Heart left ventricle (tissue), 16 donors: ENCODE measurements at regions of chr1 and their contacts with region 1.

Region 1: DNA sequence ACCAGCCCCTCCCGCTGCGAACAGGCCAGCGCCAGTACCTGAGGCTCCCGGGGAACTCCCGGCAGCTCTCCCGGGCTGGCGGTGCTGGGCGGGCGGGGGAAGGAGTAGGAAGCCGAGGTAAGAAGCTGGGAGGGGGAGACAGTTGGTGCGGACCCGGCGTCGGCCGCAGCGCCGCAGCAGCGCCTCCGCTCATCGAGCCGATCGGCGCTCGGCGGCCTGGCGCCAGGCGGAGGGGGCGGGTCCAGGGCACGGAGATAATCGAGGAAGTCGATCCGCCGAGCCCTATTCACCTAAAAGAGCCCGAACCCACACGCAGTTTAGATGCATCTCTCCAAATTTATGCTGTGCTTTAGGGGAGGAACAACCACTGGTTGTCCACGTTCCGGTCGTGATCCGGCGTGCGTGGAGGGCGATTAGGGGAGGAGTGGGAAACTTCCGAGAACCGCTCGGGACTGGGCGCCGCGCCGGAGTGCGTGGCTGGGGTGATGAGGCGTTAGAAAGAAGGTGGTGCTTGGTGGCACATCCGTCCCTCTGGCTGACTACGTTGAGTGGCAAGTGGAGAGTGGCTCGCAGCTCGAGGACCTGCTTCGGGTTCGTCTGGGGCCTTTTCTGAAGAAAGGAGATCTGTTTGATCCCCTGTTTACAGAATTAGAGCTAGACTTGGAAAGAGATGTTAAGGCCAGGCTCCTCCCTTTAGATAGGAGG is at the start of gene VAMP4:
- DNase-seq: peak; percentile 89 to 93 (median 90)
- ATAC-seq: peak; percentile 89 to 94 (median 94)
- H3K4me3 ChIP-seq: peak within 1 kb of the TSS; percentile 68 to 96 (median 88)
- H3K27ac ChIP-seq: peak within 1 kb of the TSS; percentile 86 to 98 (median 95)
- H3K4me1 ChIP-seq: peaks cover 0 to 50% (median 23%) of the 10 kb centered on the region in 12 donors
- H3K27me3 ChIP-seq: no peaks in the 10 kb centered on the region
- CTCF ChIP-seq: no peak
- POLR2A ChIP-seq: peak in 1 of 2 donors; percentile 70
- total RNA-seq, gene VAMP4: 3.8 to 11.3 (median 7.2) TPM

Region 2: DNA sequence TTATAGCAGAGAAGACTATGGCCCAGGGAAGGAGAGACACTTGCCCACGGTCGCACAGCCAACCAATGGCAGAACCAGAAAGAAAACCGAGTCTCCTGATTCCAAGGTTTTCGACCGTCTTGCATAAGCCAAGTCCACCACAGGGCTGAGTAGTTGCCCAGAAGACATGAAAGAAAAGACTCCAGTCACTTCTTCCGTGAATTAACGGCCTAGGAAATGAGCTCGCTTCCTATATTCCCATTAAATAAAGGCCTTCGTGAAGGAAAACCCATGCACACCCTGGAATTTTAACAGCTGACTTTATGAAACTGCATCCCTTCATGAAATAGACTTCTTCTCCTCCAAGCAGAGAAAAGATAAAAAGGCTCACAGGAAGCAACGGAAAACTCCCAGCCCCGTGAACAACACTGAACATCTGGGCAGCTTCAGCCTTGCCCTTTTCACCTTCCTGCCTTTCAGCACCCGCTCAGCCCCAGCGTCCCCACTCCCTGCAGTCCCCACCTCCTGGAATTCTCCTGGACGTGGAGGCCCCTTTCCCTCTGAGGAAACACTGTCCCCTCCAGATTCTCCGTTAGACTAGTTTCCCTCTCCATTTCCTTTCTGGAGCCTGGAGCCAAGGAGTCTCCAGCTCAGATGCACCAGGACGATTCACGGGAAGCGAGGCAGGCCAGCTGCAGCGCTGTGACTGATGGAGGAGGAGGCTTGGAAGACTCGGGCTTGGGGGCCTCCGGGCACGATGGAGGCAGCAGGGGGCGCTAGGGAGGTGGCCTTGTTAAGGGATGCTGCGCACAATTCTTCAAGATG is 86.9 kb before region 1 on chr1:
- intact Hi-C with region 1: loop called in 1 of 10 experiments (anchors 2 kb)
- DNase-seq: peak; percentile 85 to 91 (median 86)
- ATAC-seq: peak; percentile 84 to 92 (median 88)
- H3K4me3 ChIP-seq: peak overlapping the region in 10 of 12 donors; percentile 10 to 35 (median 21)
- H3K27ac ChIP-seq: peak overlapping the region; percentile 45 to 95 (median 79)
- H3K4me1 ChIP-seq: peaks cover 2 to 53% (median 31%) of the 10 kb centered on the region in 12 donors
- H3K27me3 ChIP-seq: no peaks in the 10 kb centered on the region
- CTCF ChIP-seq: peak; percentile 49 to 84 (median 77)
- POLR2A ChIP-seq: no peak

Region 3: GRCh38 chr1:171769171-171769570 is 27.1 kb after region 1 on chr1:
- intact Hi-C with region 1: loop called in 1 of 10 experiments (anchors 2 kb)
- DNase-seq: no peak
- ATAC-seq: no peak
- H3K4me3 ChIP-seq: no peak overlapping the region
- H3K27ac ChIP-seq: no peak overlapping the region
- H3K4me1 ChIP-seq: peaks cover 0 to 15% (median 0%) of the 10 kb centered on the region in 12 donors
- H3K27me3 ChIP-seq: no peaks in the 10 kb centered on the region
- CTCF ChIP-seq: no peak
- POLR2A ChIP-seq: no peak

Region 4: DNA sequence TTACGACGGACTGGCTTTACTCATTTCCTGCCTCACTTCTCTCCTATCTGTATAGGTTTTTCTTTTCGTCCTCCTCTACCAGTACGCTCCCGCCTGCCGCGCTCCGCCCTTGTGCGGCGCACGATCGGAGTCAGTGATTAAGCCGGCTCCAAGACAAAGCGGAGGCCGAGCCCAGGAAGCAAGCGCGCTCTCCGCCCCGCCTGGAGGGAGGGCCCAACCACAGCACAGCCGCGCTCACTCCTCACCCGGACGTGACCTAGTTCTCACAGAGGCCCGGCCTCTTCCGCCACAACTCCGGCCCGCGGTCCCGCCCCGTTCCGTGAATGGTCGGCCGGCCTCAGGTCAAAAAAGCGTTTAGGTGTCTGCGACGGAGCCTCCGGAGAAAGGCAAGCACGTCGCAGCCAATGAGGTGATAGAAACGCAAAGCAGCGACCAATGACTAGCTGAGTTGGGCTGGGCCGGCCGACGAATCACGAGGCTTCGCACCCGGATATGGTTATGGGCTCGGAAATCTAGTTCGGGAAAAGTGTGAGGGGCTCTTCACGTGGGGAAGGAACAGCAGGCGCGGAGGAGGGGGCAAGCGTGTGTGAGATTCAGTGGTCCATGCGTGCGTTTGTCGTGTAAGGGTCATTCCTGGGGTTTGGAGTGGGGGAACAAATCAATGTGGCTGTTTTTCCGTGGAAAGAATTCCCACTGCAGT is 39.3 kb after region 1 on chr1 and contains the start of gene METTL13:
- intact Hi-C with region 1: loop called in 8 of 10 experiments (anchors 1 to 5 kb)
- DNase-seq: peak; percentile 98 to 99 (median 99)
- ATAC-seq: peak; percentile 100
- H3K4me3 ChIP-seq: peak within 1 kb of the TSS; percentile 46 to 91 (median 75)
- H3K27ac ChIP-seq: peak within 1 kb of the TSS; percentile 54 to 93 (median 90)
- H3K4me1 ChIP-seq: peaks cover 0 to 31% (median 18%) of the 10 kb centered on the region in 12 donors
- H3K27me3 ChIP-seq: no peaks in the 10 kb centered on the region
- CTCF ChIP-seq: peak in 1 of 12 donors; percentile 12
- POLR2A ChIP-seq: peak; percentile 73 to 97
- total RNA-seq, gene METTL13: 13.1 to 24.1 (median 14.8) TPM